ENCODE measurements at regions of chr2 and their contacts with region 1.

Region 1: GRCh38 chr2:27281855-27282559 is at the start of gene TRIM54:
- DNase-seq: no peak
- ATAC-seq: no peak
- H3K4me3 Mint-ChIP-seq: no peak within 1 kb of the TSS
- H3K27ac Mint-ChIP-seq: no peak within 1 kb of the TSS
- H3K4me1 Mint-ChIP-seq: peaks cover 5% of the 10 kb centered on the region
- H3K27me3 Mint-ChIP-seq: peaks cover 21% of the 10 kb centered on the region
- CTCF ChIP-seq: no peak
- total RNA-seq, gene TRIM54: not detected in 2 replicates

Region 2: DNA sequence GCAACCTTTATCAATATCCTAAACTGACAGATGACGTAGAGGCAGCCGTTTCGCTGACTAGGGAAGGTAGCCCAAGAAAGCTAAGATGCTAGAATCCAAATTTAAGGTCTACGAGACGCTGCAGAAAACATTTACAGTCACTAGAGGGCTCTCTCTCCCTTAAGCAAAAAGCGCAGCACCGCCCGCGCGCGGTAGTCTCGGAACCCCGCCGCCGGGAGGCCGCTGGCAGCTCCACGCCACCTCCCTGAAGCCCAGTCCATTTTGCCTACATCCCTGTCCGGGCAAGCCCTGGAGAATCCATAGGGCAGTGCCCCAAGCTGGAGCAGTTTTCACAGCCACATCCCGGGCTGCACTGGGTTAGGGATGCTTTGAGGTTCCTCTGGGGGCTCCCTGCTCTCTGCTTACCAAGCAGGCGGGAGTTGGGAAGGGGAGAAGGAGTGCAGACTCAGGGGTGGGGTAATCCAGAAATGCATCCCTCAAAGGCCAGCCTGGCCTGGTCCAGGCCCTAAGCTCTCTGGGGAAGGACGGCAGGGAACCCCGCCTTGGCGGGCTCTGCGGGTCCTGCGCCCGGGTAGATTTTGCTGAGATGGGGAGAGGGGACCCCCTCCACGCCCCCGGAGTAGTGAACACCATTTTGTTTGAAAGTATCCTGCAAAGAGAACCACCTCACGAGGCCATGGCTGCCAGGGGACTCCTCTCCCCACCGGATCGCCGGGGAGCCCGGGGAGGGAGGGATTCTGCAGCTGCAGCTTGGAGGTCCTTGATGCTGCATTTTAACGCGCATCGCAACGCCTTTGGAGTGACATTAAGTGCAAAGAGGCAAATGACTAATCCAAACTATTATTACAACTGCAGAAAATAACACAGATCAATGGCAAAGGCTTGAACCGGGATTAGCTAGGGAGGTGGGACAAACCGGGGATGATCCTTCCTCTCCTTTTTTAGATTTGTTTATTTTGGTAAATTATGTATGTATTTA is 435.4 kb before region 1 on chr2:
- CTCF ChIA-PET with region 1: interaction called, 14 read pairs
- POLR2A ChIA-PET with region 1: no interaction called
- intact Hi-C with region 1: loop called (anchors 1 kb)
- DNase-seq: peak; percentile 54
- ATAC-seq: peak; percentile 71
- H3K4me3 Mint-ChIP-seq: peak overlapping the region; percentile 77
- H3K27ac Mint-ChIP-seq: no peak overlapping the region
- H3K4me1 Mint-ChIP-seq: peaks cover 20% of the 10 kb centered on the region
- H3K27me3 Mint-ChIP-seq: peaks cover 47% of the 10 kb centered on the region
- CTCF ChIP-seq: no peak

Region 3: GRCh38 chr2:26964446-26965130 is 317.4 kb before region 1 on chr2:
- CTCF ChIA-PET with region 1: interaction called, 100 read pairs
- POLR2A ChIA-PET with region 1: interaction called, 7 read pairs
- intact Hi-C with region 1: loop called (anchors 1 kb)
- DNase-seq: no peak
- ATAC-seq: no peak
- H3K4me3 Mint-ChIP-seq: no peak overlapping the region
- H3K27ac Mint-ChIP-seq: no peak overlapping the region
- H3K4me1 Mint-ChIP-seq: peaks cover 5% of the 10 kb centered on the region
- H3K27me3 Mint-ChIP-seq: peaks cover 36% of the 10 kb centered on the region
- CTCF ChIP-seq: no peak

Region 4: DNA sequence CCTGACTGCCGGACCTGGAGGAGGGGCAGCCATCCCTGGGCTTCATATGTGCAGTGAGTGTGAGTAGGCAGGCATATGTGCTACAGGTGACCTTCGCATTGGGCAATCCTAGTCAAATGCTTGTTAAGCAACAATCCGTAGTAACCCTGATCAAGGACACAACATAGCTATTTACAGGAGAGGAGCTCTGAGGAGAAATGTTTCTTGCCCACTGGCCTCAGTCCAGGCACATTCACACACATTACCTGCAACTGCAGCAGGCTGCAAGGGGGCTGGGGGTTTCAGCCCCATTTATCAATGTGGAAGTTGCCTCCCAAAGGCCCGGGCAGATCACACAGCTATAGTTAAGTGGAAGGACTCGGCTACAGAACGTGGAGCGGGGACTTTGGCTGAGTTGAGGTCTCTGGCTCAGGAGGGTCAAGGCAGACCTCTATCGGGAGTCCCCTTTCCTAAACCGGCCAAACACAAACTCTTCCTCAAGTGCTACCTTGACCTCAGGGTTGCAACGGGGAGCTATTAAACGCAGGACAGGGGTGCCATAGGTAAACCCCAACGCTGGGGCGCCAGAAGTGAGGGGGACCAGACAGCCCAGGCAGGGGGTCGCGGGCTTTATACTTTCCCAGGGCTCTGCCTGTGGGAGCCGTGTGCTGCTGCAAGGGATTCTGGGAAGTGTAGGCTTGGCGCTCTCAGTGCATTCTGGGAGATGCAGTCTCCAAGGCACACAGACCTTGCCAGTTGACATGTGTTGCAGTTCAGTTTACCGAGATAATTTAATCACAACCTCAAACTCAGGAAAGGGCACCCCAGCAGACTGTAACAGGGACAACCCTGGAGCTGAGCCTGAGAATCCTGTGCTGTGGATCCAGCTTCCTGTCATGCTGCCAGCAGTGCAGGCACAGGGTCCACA is 186.0 kb before region 1 on chr2:
- CTCF ChIA-PET with region 1: interaction called, 38 read pairs
- POLR2A ChIA-PET with region 1: no interaction called
- intact Hi-C with region 1: loop called (anchors 1 kb)
- DNase-seq: no peak
- ATAC-seq: peak; percentile 98
- H3K4me3 Mint-ChIP-seq: peak overlapping the region; percentile 81
- H3K27ac Mint-ChIP-seq: no peak overlapping the region
- H3K4me1 Mint-ChIP-seq: peaks cover 11% of the 10 kb centered on the region
- H3K27me3 Mint-ChIP-seq: no peaks in the 10 kb centered on the region
- CTCF ChIP-seq: no peak

Region 5: DNA sequence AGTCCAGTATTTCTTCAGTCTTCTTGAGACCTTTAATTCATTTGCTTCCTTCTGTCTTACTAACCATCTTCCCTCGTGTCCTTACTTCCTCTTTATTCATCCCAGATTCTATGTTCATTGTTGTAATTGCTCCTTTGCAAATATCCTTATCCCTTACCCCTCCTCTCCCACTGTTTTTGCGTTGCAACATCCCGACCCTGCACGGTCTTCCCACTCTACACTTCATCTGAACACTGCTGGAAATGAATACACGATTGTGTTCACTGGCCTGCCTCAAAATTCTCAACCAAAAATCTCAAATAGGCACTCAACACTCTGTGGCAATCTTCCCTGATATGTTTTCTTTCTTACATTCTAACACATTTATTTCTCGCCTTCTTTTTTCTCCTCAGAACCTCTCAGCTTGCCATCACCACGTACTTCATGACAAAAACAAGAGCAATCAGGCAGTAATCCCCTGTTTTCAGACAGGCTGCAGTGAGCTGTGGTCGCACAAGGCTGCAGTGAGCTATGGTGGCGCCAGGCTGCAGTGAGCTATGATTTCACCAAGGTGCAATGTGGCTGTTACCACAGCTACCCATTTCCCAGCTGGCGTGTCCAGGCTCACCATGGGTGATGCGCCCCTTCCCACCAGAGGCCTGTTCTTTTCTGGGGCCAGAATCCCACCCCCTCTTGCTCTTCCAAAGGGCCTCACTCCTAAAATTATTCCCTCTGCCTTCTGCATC is 107.5 kb before region 1 on chr2:
- CTCF ChIA-PET with region 1: interaction called, 11 read pairs
- POLR2A ChIA-PET with region 1: interaction called, 7 read pairs
- intact Hi-C with region 1: loop called (anchors 5 kb)
- DNase-seq: no peak
- ATAC-seq: no peak
- H3K4me3 Mint-ChIP-seq: no peak overlapping the region
- H3K27ac Mint-ChIP-seq: no peak overlapping the region
- H3K4me1 Mint-ChIP-seq: peaks cover 9% of the 10 kb centered on the region
- H3K27me3 Mint-ChIP-seq: peaks cover 9% of the 10 kb centered on the region
- CTCF ChIP-seq: no peak

Region 6: DNA sequence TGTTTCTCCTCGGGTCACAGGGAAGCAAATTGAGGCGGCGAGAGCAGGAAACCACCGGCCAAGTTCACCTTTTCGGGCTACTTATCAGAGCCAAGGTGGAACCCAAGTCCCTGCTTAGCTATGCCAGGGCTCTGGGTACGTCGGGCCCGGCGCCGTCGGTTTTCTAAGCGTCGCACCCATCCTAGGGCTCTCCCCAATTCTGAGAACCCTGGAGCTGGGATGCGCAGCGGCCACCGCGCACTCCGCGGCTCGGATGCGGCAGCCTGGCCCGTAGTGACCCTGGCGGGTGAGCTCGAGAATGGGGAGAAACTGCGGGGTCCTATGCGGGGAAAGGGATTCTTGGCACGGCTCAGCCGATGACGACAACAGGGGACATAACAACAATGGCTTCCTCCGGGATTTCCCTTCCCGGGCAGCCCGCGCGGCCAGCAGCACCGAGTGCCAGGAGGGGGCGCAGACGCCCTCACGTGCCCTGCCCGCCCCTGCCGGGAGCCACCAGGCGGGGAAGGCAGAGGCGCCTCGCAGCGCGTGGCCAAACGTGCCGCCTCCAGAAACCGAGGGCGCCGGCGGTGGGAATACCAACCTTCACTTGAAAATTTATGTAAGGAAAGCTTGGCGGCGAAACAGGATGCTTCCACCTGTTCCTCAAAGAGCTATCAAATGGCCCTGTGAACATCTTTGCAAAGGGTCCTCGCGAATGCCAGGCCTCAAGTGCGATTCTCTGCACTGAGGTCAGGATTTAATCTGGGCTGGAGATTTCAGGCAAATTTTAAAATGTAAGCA is 17.1 kb before region 1 on chr2:
- CTCF ChIA-PET with region 1: interaction called, 22 read pairs
- POLR2A ChIA-PET with region 1: interaction called, 4 read pairs
- intact Hi-C with region 1: no loop called
- DNase-seq: peak; percentile 68
- ATAC-seq: peak; percentile 73
- H3K4me3 Mint-ChIP-seq: peak overlapping the region; percentile 88
- H3K27ac Mint-ChIP-seq: no peak overlapping the region
- H3K4me1 Mint-ChIP-seq: peaks cover 33% of the 10 kb centered on the region
- H3K27me3 Mint-ChIP-seq: peaks cover 44% of the 10 kb centered on the region
- CTCF ChIP-seq: no peak

Region 7: DNA sequence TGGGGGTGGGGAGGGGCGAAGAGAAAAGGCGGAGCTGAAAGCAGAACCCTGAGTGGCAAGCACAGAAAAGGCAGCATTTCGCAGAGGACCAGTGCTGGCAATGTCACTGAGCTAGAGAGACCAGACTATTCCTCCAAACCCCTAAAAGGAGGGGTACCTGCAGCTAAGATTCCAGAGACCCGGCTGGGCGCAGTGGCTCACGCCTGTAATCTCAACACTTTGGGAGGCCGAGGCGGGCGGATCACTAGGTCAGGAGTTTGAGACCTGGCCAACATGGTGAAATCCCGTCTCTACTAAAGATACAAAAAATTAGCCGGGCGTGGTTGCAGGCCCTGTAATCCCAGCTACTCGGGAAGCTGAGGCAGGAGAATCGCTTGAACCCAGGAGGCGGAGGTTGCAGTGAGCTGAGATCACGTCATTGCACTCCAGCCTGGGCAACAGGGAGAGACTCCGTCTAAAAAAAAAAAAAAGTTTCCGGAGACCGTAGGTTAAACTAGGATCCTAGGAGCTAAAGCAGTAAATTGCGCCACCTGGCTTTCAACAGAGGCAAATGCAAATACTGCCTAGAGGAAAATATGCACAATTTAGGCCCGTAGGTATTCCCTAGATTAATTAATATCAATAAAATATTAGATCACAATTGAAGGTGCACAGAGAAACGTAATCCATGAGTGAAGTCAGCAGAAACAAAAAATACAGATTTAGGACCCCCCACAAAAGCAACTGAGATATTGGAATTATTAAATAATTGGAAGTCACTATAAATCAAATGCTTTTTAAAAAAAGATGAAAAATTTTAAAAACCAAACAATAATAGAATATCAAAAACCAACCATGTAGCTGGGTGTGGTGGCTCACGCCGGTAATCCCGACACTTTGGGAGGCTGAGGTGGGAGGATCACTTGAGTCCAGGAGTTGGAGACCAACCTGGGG is 21.4 kb after region 1 on chr2:
- CTCF ChIA-PET with region 1: interaction called, 12 read pairs
- POLR2A ChIA-PET with region 1: no interaction called
- intact Hi-C with region 1: no loop called
- DNase-seq: no peak
- ATAC-seq: peak; percentile 75
- H3K4me3 Mint-ChIP-seq: peak overlapping the region; percentile 72
- H3K27ac Mint-ChIP-seq: no peak overlapping the region
- H3K4me1 Mint-ChIP-seq: peaks cover 11% of the 10 kb centered on the region
- H3K27me3 Mint-ChIP-seq: peaks cover 23% of the 10 kb centered on the region
- CTCF ChIP-seq: peak; percentile 61

Region 8: GRCh38 chr2:27428213-27428977 is 146.4 kb after region 1 on chr2 and contains the start of gene NRBP1:
- CTCF ChIA-PET with region 1: no interaction called
- POLR2A ChIA-PET with region 1: no interaction called
- intact Hi-C with region 1: no loop called
- DNase-seq: peak; percentile 95
- ATAC-seq: peak; percentile 90
- H3K4me3 Mint-ChIP-seq: peak within 1 kb of the TSS; percentile 98
- H3K27ac Mint-ChIP-seq: peak within 1 kb of the TSS; percentile 98
- H3K4me1 Mint-ChIP-seq: peaks cover 50% of the 10 kb centered on the region
- H3K27me3 Mint-ChIP-seq: no peaks in the 10 kb centered on the region
- CTCF ChIP-seq: no peak
- total RNA-seq, gene NRBP1: 78.9 and 82.3 TPM in 2 replicates

Measured in activated B cell treated with CpG ODN at 0.5 μM for 24 hours (primary cell).